ENCODE measurements at regions of chr22 and their contacts with region 1.

Region 1: GRCh38 chr22:46833228-46833627 is 70.8 kb downstream of the TBC1D22A start:
- DNase-seq: peak; percentile 39 to 63
- H3K4me3 ChIP-seq: no peak overlapping the region
- H3K27ac ChIP-seq: no peak overlapping the region
- H3K4me1 ChIP-seq: peaks cover 0 to 8% (median 3%) of the 10 kb centered on the region in 4 experiments; a peak in 3 of 7 replicates
- H3K27me3 ChIP-seq: no peaks in the 10 kb centered on the region
- CTCF ChIP-seq: peak; percentile 44 to 73 (median 69)
- EP300 ChIP-seq: no peak
- POLR2A ChIP-seq: no peak
- RAD21 ChIP-seq: peak; percentile 70 to 78

Region 2: DNA sequence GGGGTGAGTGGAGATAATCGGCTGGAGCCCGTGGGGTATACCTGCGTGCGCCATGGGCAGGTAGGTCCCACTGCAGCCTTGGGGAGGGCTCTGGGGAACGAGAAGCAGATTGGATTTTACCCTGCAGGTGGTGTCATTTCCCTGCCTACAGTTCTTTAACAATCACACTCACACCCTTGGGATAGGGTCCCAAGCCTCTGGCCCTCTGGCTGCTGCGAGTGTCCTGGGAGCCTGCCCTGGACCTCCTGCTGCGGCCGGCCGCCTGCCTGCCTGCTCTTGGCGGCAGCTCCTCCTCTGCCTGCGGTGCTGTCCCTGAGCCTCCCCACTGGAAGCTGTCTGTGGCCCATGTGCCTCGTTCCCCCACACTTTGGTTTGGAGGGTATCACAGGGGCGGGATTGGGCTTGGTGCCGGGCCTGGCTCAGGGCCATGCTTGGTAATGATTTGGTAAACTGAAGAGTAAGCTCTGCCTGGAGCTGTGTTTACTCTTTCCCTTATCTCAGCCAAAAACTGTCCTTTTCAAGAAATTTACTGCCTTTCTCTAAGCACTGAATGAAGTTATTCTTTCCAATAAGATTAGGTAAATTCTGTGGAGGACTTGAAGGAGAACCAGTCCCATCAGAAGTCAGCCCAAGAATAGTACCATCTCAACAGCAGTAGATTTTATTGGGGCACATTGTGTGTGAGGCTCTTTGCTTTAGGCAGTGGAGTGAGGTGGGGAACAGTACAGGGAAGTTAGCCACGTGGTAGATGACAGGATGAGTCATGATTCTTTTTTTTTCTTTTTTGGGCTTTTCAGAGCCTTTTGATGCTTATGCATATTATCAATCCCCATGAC is 17.1 kb before region 1 on chr22:
- CTCF ChIA-PET with region 1: interaction called, 19 read pairs
- POLR2A ChIA-PET with region 1: no interaction called
- DNase-seq: peak in 1 of 2 experiments; percentile 45
- H3K4me3 ChIP-seq: no peak overlapping the region
- H3K27ac ChIP-seq: 0 out of 2 replicates have a peak overlapping the region, but pooled peaks have one; percentile 12
- H3K4me1 ChIP-seq: peaks cover 0 to 2% (median under 1%) of the 10 kb centered on the region in 4 experiments; a peak in 1 of 7 replicates
- H3K27me3 ChIP-seq: no peaks in the 10 kb centered on the region
- CTCF ChIP-seq: no peak
- EP300 ChIP-seq: no peak
- POLR2A ChIP-seq: no peak
- RAD21 ChIP-seq: no peak

Region 3: DNA sequence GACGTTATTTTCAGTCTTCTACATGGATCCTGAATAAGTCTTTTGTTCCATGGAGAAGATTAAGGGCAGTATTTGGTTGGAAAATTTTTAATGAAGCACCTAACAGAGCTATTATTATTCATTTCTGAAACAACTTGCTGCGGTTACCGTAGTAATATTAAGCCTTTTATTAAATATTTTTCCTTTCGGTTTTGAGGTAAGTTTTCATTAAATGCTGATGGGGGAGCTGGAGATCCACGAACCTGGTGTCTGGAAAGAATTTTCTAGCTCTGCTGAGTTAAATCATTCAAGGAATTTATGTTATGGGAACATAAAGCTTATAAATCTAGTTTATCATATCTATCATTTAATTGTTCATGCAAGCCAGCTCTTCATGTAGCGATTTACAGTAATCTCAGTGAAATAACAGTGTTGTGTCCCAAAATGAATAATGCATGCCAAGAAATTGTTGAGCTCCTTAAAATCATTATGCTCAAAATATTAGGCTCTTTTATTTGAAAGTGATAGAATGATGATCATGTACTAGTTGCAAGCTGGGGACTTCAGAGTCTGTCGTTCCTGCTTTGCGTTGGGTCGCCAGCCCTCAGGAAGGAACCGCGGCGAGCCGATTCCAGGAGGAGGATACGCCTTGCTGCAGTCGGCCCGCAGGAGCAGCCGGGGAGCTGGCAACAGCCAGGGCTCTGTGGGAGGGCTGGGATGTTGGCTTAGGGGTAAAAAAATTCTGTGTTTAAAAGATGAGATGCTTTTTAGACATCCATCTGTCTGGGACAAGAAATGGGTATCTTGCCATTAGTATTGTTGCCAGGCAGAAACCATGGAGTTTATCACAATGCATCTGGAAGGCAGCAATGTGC is 12.3 kb after region 1 on chr22:
- CTCF ChIA-PET with region 1: interaction called, 19 read pairs
- POLR2A ChIA-PET with region 1: no interaction called
- DNase-seq: no peak
- H3K4me3 ChIP-seq: no peak overlapping the region
- H3K27ac ChIP-seq: no peak overlapping the region
- H3K4me1 ChIP-seq: peaks cover 0 to 3% (median 0%) of the 10 kb centered on the region in 4 experiments; a peak in 2 of 7 replicates
- H3K27me3 ChIP-seq: no peaks in the 10 kb centered on the region
- CTCF ChIP-seq: peak in 2 of 3 experiments; percentile 15 to 20; a peak in 2 of 4 replicates
- EP300 ChIP-seq: no peak
- POLR2A ChIP-seq: no peak
- RAD21 ChIP-seq: peak; percentile 58 to 62

Measured in H1 (cell line).